Psoas muscle (tissue), 8 donors: ENCODE measurements at regions of chr1 and their contacts with region 1.

Region 1: DNA sequence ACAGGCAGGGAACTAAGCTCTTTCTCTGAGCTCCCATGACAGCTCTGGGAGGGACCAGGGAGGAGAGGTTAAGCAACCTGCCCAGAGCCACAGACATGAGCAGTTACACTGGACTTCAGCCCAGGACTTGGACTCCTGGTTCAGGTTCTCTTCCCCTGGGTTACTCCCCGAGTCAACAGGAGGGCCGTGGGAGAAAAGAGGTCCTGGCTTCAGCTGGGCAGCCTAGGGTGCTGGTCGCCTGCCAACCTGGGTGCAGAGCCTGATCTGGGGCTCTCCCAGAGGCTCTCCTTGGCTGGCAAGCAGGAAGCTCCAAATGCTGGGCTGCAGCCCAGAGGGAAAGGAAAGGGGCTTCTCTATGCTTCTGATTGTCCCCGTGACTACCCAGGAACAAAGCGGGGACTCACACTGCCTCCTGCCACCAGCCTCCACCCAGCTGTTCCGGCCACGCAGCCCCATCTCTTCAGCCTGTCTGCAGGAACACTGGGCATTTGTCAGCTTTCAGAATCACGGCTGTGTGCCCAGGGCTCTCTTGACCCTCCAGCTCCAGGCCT is 141.8 kb downstream of the HIVEP3 start:
- DNase-seq: no peak
- ATAC-seq: peak; percentile 51 to 78 (median 76)
- H3K4me3 ChIP-seq: no peak overlapping the region
- H3K27ac ChIP-seq: no peak overlapping the region
- H3K4me1 ChIP-seq: peaks cover 14% of the 10 kb centered on the region
- H3K27me3 ChIP-seq: no peaks in the 10 kb centered on the region
- CTCF ChIP-seq: no peak

Region 2: DNA sequence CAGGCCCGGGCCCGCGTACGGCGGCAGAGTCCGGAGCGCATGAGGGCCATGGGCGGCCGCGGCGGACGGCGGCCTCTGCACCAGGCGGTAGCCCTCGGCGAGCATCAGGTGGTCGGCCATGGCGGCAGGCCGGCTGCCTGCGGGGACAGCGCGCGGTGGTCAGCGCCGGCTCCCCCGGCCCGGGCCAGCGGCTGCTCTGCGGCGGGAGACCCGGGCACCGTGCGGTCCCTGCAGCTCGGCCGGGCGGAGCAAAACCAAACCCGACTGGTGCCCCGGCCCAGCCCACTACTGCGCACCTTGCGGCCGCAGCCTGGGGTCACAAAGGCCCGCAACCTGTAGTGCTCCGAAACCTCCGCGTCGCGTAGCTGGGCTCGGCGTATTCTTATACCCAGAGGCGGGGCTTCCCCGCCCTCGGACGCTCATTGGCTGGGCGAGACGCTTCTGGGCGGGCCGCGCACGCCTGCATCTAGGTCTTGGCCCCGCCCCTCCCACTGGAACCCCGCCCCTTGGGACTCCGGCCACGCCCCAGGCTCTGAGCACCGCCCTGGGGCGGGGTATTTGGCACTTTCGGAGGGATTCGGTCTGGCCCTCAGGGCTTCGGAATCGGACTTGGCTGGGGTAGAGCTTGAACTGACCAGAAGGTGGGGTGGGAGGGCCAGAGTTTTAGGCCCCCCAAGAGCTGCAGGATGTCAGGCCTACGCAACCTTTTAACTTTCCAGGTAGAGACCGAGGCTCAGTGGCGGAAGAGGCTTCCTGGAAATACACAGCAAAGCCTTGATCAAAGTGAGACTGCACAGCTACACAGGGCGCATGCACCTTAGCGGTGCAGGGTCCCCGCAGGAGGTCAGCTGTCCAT is 914.7 kb before region 1 on chr1 and contains the start of gene CITED4:
- intact Hi-C with region 1: no loop called
- DNase-seq: peak; percentile 95 to 98
- ATAC-seq: peak; percentile 94 to 97 (median 96)
- H3K4me3 ChIP-seq: peak within 1 kb of the TSS; percentile 86
- H3K27ac ChIP-seq: peak within 1 kb of the TSS; percentile 94
- H3K4me1 ChIP-seq: peaks cover 17% of the 10 kb centered on the region
- H3K27me3 ChIP-seq: no peaks in the 10 kb centered on the region
- CTCF ChIP-seq: peak; percentile 18
- total RNA-seq, gene CITED4: 16.0 to 24.7 (median 18.6) TPM

Region 3: DNA sequence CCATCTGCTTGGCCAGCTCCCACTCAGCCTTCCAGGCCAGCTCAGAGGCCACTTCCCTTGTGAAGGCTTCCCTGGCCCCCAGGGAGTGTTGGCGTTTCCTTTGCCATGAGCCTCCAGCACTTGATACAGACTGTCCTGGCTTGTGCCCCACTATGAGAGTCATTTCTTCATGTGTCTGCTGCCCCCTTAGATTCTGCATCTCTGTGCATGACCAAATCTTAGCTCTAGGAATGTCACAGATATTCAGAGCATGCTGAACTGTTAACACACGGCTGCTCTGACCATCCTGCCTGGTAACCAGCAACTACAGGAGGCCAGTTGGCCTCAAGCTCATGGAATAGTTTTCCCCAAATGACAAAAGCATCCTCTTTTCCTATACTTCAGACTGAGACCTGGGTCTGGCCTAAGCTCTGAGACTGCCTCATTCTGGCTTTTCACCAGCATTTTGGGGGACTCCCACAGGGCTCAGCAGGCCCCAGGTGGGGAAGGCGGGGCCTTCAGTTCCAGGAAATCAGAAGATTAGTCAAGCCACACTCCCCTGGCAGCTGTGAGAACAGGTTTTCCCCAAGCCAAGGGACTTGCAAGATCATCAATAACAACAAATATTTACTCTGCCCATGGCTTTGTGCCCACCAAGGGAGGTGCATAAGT is 109.9 kb before region 1 on chr1:
- intact Hi-C with region 1: loop called in 1 of 2 experiments (anchors 5 kb)
- DNase-seq: no peak
- ATAC-seq: no peak
- H3K4me3 ChIP-seq: no peak overlapping the region
- H3K27ac ChIP-seq: no peak overlapping the region
- H3K4me1 ChIP-seq: peaks cover 7% of the 10 kb centered on the region
- H3K27me3 ChIP-seq: no peaks in the 10 kb centered on the region
- CTCF ChIP-seq: no peak

Region 4: GRCh38 chr1:42035830-42036604 is 259.1 kb after region 1 on chr1:
- intact Hi-C with region 1: no loop called
- DNase-seq: peak; percentile 97 to 98
- ATAC-seq: peak; percentile 98 to 99 (median 98)
- H3K4me3 ChIP-seq: peak overlapping the region; percentile 96
- H3K27ac ChIP-seq: peak overlapping the region; percentile 76
- H3K4me1 ChIP-seq: peaks cover 8% of the 10 kb centered on the region
- H3K27me3 ChIP-seq: no peaks in the 10 kb centered on the region
- CTCF ChIP-seq: no peak

Region 5: DNA sequence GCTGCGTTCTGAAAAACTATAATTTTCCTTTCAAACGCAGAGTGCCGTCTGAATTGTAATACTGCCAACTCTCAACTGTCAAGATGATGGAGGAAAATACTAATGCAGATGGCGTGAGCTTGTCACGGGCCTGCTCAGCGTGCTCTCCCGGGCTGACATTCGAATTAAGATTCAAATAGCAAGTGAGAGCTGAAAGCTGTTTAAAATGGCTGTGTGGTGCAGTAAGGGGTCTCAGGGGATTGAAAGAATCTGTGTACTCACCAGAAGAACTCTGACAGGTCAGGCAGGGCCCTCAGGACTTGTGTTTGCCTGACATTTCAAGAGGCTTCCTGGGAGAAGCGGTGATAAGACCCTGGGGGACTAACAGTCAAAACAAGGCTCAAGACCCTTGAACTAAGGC is 645.8 kb after region 1 on chr1:
- intact Hi-C with region 1: no loop called
- DNase-seq: peak in 1 of 2 donors; percentile 41
- ATAC-seq: no peak
- H3K4me3 ChIP-seq: no peak overlapping the region
- H3K27ac ChIP-seq: no peak overlapping the region
- H3K4me1 ChIP-seq: peaks cover 12% of the 10 kb centered on the region
- H3K27me3 ChIP-seq: no peaks in the 10 kb centered on the region
- CTCF ChIP-seq: no peak